Activated CD4-positive, alpha-beta T cell treated with anti-CD3 and anti-CD28 coated beads, Interleukin-2, amount 10 ng/mL, durations not matched to agents 7 days and 5 days (primary cell): ENCODE measurements at regions of chr7 and their contacts with region 1.

Region 1: DNA sequence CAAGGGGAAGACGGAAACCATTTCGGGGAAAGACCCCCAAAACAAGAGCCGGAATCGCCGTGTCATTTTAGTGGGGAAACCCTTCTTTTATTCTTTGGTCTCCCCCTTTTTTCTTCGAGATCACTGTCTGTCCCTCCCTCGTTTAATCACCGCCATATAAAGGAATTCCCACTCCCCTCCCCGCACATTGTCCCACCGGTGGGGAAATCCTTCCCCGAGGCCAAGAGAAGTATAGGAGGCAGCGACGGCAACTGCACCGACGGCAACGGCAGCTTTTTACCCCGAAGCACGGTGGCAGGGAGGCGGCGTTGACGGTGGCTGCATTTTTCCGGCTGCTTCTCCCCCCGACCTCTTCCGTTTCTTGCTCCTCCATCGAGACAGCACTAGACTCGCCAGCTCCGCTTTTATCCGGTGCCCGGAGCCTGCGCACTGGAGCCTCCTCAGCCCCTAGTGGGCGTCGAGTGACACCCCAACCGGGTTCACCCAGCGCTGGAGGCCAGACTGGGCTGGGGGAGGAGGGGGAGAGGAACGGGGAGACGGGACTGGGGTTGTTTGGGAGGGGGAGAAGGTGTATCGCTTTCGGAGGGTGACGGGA is 687 bp upstream of the KMT2E start:
- DNase-seq: peak; percentile 96
- H3K4me3 Mint-ChIP-seq: peak overlapping the region; percentile 99
- H3K27ac Mint-ChIP-seq: peak overlapping the region; percentile 100
- H3K4me1 Mint-ChIP-seq: peaks cover 39% of the 10 kb centered on the region
- H3K27me3 Mint-ChIP-seq: no peaks in the 10 kb centered on the region

Region 2: GRCh38 chr7:105028004-105028403 is 14.7 kb after region 1 on chr7:
- CTCF ChIA-PET with region 1: interaction called, 10 read pairs
- POLR2A ChIA-PET with region 1: no interaction called
- DNase-seq: no peak
- H3K4me3 Mint-ChIP-seq: no peak overlapping the region
- H3K27ac Mint-ChIP-seq: no peak overlapping the region
- H3K4me1 Mint-ChIP-seq: peaks cover 66% of the 10 kb centered on the region
- H3K27me3 Mint-ChIP-seq: no peaks in the 10 kb centered on the region

Region 3: GRCh38 chr7:105060437-105060836 is 47.1 kb after region 1 on chr7:
- CTCF ChIA-PET with region 1: no interaction called
- POLR2A ChIA-PET with region 1: no interaction called
- DNase-seq: no peak
- H3K4me3 Mint-ChIP-seq: no peak overlapping the region
- H3K27ac Mint-ChIP-seq: no peak overlapping the region
- H3K4me1 Mint-ChIP-seq: peaks cover 23% of the 10 kb centered on the region
- H3K27me3 Mint-ChIP-seq: no peaks in the 10 kb centered on the region